ENCODE measurements at regions of chr20 and their contacts with region 1.

Region 1: DNA sequence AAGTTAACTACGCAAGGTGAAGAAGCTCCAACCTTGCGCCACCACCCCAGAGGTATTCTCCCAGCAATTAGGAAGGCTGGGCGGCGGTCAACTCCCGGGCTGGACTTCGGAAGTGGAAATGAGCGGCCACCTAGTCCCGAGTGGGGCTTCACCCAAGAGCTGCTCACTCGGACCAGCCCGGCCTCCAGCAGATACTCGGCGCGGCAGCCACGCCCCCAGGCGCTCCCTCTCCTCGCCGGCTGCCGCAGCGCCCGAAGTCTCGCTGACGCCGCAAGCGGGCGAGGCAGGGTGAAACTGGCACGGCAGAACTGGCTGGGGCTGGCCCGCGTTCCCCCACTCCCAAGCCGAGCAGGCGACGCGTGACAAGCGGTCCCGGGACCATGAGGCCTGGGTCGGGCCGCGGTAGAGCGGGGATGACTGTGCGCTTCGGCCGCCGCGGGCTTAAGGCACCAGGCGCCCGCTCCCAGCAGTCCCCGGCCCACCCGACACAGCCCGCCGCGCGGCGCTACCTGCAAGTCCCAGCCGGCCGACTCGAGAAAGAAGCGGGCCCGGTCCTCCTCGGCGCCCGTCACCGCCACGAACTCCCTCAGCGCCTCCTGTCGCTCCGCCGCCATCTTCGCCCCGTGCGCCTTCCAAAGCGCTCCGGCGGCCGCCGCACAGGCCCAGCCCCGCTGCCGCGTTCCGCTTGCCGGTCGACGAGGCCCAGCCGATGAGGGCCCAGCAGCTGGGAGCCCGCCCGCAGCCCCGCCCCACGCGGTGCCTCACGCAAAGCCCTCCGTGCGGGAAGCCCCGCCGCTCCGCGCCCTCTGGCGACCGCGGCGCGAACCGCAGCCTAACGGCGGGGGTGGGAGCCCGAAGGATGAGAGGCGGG is at the start of gene NSFL1C:
- DNase-seq: peak; percentile 77 to 95
- H3K4me3 ChIP-seq: peak within 1 kb of the TSS; percentile 92
- H3K4me1 ChIP-seq: peaks cover 8% of the 10 kb centered on the region
- H3K27me3 ChIP-seq: peaks cover 15% of the 10 kb centered on the region

Region 2: DNA sequence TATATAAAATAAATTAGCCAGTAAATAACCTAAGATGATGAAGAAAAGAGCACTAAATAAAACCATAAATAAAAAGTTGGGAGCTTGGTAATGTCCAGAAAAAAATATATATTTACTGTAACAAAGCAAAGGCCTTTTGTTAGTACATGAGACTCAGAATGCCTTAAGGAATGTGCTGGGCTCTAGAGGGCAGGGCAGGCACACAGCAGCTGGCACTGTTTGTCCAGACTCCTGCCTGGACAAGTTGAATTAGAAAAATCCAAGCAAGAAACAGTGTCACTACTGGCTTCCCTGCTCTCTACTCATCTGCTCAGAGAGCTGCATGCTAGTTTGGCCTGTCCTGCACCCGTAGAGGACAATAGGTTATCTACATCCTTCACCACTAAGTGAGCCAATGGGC is 1230.6 kb before region 1 on chr20:
- in situ Hi-C with region 1: no loop called
- DNase-seq: peak in 1 of 2 experiments; percentile 10
- H3K4me3 ChIP-seq: no peak overlapping the region
- H3K4me1 ChIP-seq: no peaks in the 10 kb centered on the region
- H3K27me3 ChIP-seq: no peaks in the 10 kb centered on the region

Region 3: DNA sequence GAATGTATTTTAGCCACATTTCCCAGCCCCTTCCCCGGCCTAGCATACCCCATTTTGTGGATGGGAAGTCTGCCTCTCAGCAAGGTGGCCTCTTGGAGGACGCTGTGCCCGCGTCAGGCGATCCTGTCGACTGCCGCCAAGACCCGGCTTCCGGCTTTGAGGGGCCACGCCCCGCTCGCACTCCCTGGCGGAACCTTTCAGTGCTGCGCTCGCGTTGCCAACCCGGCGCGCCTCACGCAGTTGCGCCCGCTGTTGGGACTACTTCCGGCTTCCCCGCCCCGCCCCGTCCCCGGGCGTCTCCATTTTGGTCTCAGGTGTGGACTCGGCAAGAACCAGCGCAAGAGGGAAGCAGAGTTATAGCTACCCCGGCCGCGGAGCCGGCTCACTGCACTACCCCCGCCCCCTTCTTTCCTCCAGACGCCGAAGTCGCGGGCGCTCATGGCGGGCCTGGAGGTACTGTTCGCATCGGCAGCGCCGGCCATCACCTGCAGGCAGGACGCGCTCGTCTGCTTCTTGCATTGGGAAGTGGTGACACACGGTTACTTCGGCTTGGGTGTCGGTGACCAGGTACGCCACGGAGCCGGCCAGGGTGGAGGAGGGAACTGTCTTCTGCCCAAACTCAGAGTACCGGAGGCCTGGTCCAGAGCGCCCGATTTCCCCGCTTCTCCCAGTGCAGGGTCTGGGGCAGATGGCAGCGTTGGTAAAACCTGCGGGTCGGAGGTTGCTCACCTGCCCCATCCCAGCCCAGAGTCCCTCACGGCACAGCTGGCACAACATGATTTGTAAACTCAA is 347.9 kb before region 1 on chr20 and contains the start of gene PSMF1:
- in situ Hi-C with region 1: loop called (anchors 25 kb)
- DNase-seq: peak; percentile 82 to 95
- H3K4me3 ChIP-seq: peak within 1 kb of the TSS; percentile 99
- H3K4me1 ChIP-seq: peaks cover 4% of the 10 kb centered on the region; the same call in 1 of the 2 replicates
- H3K27me3 ChIP-seq: no peaks in the 10 kb centered on the region